CD4-positive, alpha-beta T cell (primary cell): ENCODE measurements at regions of chr1 and their contacts with region 1.

Region 1: GRCh38 chr1:221741711-221742554 is at the start of gene DUSP10:
- DNase-seq: peak; percentile 97 to 100 (median 98)
- ATAC-seq: peak; percentile 85
- H3K4me3 ChIP-seq: peak within 1 kb of the TSS; percentile 75
- H3K4me3 Mint-ChIP-seq: peak within 1 kb of the TSS; percentile 75
- H3K27ac ChIP-seq: peak within 1 kb of the TSS; percentile 98 to 99
- H3K27ac Mint-ChIP-seq: no peak within 1 kb of the TSS
- H3K4me1 ChIP-seq: peaks cover 41% of the 10 kb centered on the region
- H3K4me1 Mint-ChIP-seq: peaks cover 26% of the 10 kb centered on the region
- H3K27me3 ChIP-seq: no peaks in the 10 kb centered on the region
- H3K27me3 Mint-ChIP-seq: no peaks in the 10 kb centered on the region
- CTCF ChIP-seq: no peak
- total RNA-seq, gene DUSP10: 66.9 to 70.9 TPM

Region 2: GRCh38 chr1:221664253-221664652 is 77.7 kb before region 1 on chr1:
- CTCF ChIA-PET with region 1: no interaction called
- POLR2A ChIA-PET with region 1: interaction called, 5 read pairs
- intact Hi-C with region 1: loop called in 1 of 2 experiments (anchors 5 kb)
- DNase-seq: no peak
- ATAC-seq: no peak
- H3K4me3 ChIP-seq: no peak overlapping the region
- H3K4me3 Mint-ChIP-seq: no peak overlapping the region
- H3K27ac ChIP-seq: no peak overlapping the region
- H3K27ac Mint-ChIP-seq: no peak overlapping the region
- H3K4me1 ChIP-seq: no peaks in the 10 kb centered on the region
- H3K4me1 Mint-ChIP-seq: no peaks in the 10 kb centered on the region
- H3K27me3 ChIP-seq: peaks cover 0 to 3% of the 10 kb centered on the region in 2 experiments
- H3K27me3 Mint-ChIP-seq: peaks cover 6% of the 10 kb centered on the region
- CTCF ChIP-seq: no peak

Region 3: GRCh38 chr1:221708987-221709386 is 32.9 kb before region 1 on chr1:
- CTCF ChIA-PET with region 1: interaction called, 22 read pairs
- POLR2A ChIA-PET with region 1: interaction called, 172 read pairs
- intact Hi-C with region 1: loop called (anchors 1 to 2 kb)
- DNase-seq: peak in 13 of 14 experiments; percentile 7 to 92 (median 39)
- ATAC-seq: peak; percentile 42
- H3K4me3 ChIP-seq: no peak overlapping the region
- H3K4me3 Mint-ChIP-seq: no peak overlapping the region
- H3K27ac ChIP-seq: peak overlapping the region in 1 of 2 donors; percentile 75
- H3K27ac Mint-ChIP-seq: peak overlapping the region; percentile 78
- H3K4me1 ChIP-seq: peaks cover 46% of the 10 kb centered on the region
- H3K4me1 Mint-ChIP-seq: peaks cover 71% of the 10 kb centered on the region
- H3K27me3 ChIP-seq: no peaks in the 10 kb centered on the region
- H3K27me3 Mint-ChIP-seq: no peaks in the 10 kb centered on the region
- CTCF ChIP-seq: no peak

Region 4: GRCh38 chr1:221753828-221754188 is 11.9 kb after region 1 on chr1:
- CTCF ChIA-PET with region 1: no interaction called
- POLR2A ChIA-PET with region 1: interaction called, 11 read pairs
- intact Hi-C with region 1: no loop called
- DNase-seq: no peak
- ATAC-seq: no peak
- H3K4me3 ChIP-seq: no peak overlapping the region
- H3K4me3 Mint-ChIP-seq: no peak overlapping the region
- H3K27ac ChIP-seq: no peak overlapping the region
- H3K27ac Mint-ChIP-seq: no peak overlapping the region
- H3K4me1 ChIP-seq: no peaks in the 10 kb centered on the region
- H3K4me1 Mint-ChIP-seq: peaks cover 12% of the 10 kb centered on the region
- H3K27me3 ChIP-seq: peaks cover 0 to 5% of the 10 kb centered on the region in 2 experiments
- H3K27me3 Mint-ChIP-seq: no peaks in the 10 kb centered on the region
- CTCF ChIP-seq: no peak

Region 5: GRCh38 chr1:222465211-222466041 is 723.5 kb after region 1 on chr1:
- CTCF ChIA-PET with region 1: no interaction called
- POLR2A ChIA-PET with region 1: interaction called, 3 read pairs
- intact Hi-C with region 1: loop called in 1 of 2 experiments (anchors 1 kb)
- DNase-seq: peak; percentile 49 to 89 (median 72)
- ATAC-seq: peak; percentile 91
- H3K4me3 ChIP-seq: peak overlapping the region; percentile 69
- H3K4me3 Mint-ChIP-seq: peak overlapping the region; percentile 94
- H3K27ac ChIP-seq: peak overlapping the region; percentile 25 to 34
- H3K27ac Mint-ChIP-seq: peak overlapping the region; percentile 93
- H3K4me1 ChIP-seq: peaks cover 10% of the 10 kb centered on the region
- H3K4me1 Mint-ChIP-seq: peaks cover 19% of the 10 kb centered on the region
- H3K27me3 ChIP-seq: no peaks in the 10 kb centered on the region
- H3K27me3 Mint-ChIP-seq: peaks cover 5% of the 10 kb centered on the region
- CTCF ChIP-seq: peak; percentile 100

Region 6: GRCh38 chr1:222643938-222644635 is 902.2 kb after region 1 on chr1:
- CTCF ChIA-PET with region 1: no interaction called
- POLR2A ChIA-PET with region 1: interaction called, 12 read pairs
- intact Hi-C with region 1: no loop called
- DNase-seq: peak; percentile 91 to 99 (median 96)
- ATAC-seq: peak; percentile 83
- H3K4me3 ChIP-seq: peak overlapping the region; percentile 73
- H3K4me3 Mint-ChIP-seq: peak overlapping the region; percentile 94
- H3K27ac ChIP-seq: peak overlapping the region; percentile 95 to 97
- H3K27ac Mint-ChIP-seq: peak overlapping the region; percentile 99
- H3K4me1 ChIP-seq: peaks cover 20% of the 10 kb centered on the region
- H3K4me1 Mint-ChIP-seq: peaks cover 44% of the 10 kb centered on the region
- H3K27me3 ChIP-seq: no peaks in the 10 kb centered on the region
- H3K27me3 Mint-ChIP-seq: no peaks in the 10 kb centered on the region
- CTCF ChIP-seq: no peak